ENCODE measurements at regions of chr6 and their contacts with region 1.

Region 1: DNA sequence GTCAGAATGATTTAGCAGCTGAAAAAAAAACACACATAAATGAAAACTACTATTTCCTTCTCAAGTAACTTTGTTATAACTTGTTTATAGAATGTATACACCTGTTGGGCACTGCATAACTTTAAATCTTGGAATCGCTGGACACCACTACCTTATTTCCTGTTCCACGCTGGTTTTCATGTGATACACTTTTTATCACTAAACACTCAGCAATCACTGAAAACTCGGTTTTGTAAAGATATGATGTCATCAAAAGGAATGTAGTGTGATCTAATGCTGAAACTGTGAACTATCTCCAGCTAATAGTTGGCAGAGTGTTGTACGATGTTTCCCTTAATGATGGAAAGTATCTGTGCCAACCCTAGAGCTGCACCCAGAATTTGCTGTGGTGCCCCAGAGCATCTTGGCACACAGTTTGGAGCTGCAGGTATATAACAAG is 127.9 kb downstream of the BACH2 start:
- DNase-seq: no peak
- ATAC-seq: peak in 3 of 4 donors; percentile 52 to 65 (median 56)
- H3K4me3 ChIP-seq: no peak overlapping the region
- H3K27ac ChIP-seq: peak overlapping the region in 10 of 12 donors; percentile 45 to 78 (median 69)
- H3K4me1 ChIP-seq: peaks cover 0 to 19% (median 12%) of the 10 kb centered on the region in 12 donors
- H3K27me3 ChIP-seq: no peaks in the 10 kb centered on the region
- CTCF ChIP-seq: no peak
- POLR2A ChIP-seq: no peak

Region 2: DNA sequence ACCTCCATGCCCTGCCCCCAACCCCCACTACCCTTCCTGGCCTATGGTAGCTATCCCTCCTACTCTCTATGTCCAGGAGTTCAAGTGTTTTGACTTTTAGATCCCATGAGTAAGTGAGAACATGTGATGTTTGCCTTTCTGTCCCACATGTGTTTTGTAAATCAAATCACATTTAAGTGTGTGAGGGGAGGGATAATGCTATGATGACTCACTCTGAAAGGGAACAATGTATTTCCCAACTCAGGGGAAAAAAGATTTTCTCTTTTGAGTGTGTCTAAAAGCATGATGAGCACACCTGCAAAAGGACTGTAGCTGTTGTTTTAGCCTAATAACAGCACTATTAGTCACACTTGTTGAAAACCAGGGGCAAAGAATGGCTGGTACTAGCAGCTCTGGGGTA is 80.7 kb before region 1 on chr6:
- intact Hi-C with region 1: loop called in 1 of 10 experiments (anchors 5 kb)
- DNase-seq: no peak
- ATAC-seq: peak in 3 of 4 donors; percentile 50 to 82 (median 61)
- H3K4me3 ChIP-seq: no peak overlapping the region
- H3K27ac ChIP-seq: no peak overlapping the region
- H3K4me1 ChIP-seq: peaks cover 0 to 11% (median 0%) of the 10 kb centered on the region in 12 donors
- H3K27me3 ChIP-seq: no peaks in the 10 kb centered on the region
- CTCF ChIP-seq: no peak
- POLR2A ChIP-seq: no peak

Region 3: GRCh38 chr6:90131614-90132423 is 36.9 kb before region 1 on chr6:
- intact Hi-C with region 1: no loop called
- DNase-seq: peak in 4 of 5 donors; percentile 28 to 54 (median 32)
- ATAC-seq: peak in 3 of 4 donors; percentile 57 to 64 (median 58)
- H3K4me3 ChIP-seq: no peak overlapping the region
- H3K27ac ChIP-seq: peak overlapping the region in 1 of 12 donors; percentile 6
- H3K4me1 ChIP-seq: peaks cover 0 to 19% (median 3%) of the 10 kb centered on the region in 12 donors
- H3K27me3 ChIP-seq: no peaks in the 10 kb centered on the region
- CTCF ChIP-seq: no peak
- POLR2A ChIP-seq: no peak